MCF 10A (cell line): ENCODE measurements at regions of chr14 and their contacts with region 1.

Region 1: DNA sequence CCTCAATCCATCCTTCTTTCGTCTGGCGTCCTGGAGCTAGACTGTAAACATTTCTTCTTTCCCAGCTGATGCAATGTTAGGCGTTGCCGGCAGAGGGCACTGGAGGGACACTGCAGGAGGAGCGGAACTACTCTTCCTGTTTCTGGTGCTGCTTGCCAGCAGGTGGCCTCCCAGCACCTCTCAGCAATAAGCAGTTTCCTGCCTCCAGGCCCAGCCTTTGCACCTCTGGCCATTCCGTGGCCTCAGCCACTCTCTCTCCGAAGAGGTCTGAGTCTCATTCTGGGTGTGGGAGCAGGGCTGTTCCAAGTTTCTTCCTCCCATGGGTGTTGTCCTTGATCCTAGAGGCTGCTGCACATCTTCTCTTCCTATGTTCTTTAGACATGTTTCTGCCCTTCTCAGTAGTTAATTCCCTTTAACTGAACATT is 7.5 kb upstream of the ASPG start:
- DNase-seq: peak; percentile 86
- H3K4me3 Mint-ChIP-seq: no peak overlapping the region
- H3K27ac Mint-ChIP-seq: no peak overlapping the region
- H3K4me1 Mint-ChIP-seq: no peaks in the 10 kb centered on the region
- H3K27me3 Mint-ChIP-seq: no peaks in the 10 kb centered on the region
- CTCF ChIP-seq: peak; percentile 100

Region 2: DNA sequence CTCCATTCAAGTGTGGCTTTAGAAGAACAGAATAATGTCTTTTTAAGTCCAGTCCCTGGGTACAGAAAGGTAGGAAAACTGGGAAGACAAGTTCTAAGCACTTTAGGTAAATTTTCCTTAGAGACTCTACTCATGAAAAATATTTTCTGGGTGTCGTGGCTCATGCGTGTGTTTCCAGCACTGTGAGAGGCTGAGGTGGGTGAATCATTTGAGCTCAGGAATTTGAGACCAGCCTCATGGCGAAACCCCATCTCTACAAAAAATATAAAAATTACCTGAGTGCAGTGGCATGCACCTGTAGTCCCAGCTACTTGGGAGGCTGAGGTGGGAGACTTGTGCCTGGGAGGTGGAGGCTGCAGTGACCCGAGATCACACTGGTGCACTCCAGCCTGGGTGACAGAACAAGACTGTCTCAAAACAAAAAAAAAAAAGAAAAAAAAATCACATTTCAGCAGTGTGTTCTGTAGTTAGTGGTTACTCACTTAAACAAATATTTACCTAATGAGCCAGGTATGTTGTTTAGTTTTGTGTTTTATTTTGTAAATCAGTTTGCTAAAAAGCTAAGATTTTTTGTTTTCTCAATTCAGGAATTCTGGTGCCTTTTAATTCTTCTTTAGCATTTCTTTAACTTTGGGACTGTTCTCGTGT is 83.4 kb before region 1 on chr14:
- CTCF ChIA-PET with region 1: interaction called, 18 read pairs
- POLR2A ChIA-PET with region 1: interaction called, 5 read pairs
- intact Hi-C with region 1: no loop called
- DNase-seq: peak; percentile 20
- H3K4me3 Mint-ChIP-seq: no peak overlapping the region
- H3K27ac Mint-ChIP-seq: no peak overlapping the region
- H3K4me1 Mint-ChIP-seq: no peaks in the 10 kb centered on the region
- H3K27me3 Mint-ChIP-seq: no peaks in the 10 kb centered on the region
- CTCF ChIP-seq: no peak

Region 3: GRCh38 chr14:104094709-104095438 is 16.8 kb after region 1 on chr14:
- CTCF ChIA-PET with region 1: interaction called, 16 read pairs
- POLR2A ChIA-PET with region 1: no interaction called
- intact Hi-C with region 1: no loop called
- DNase-seq: peak; percentile 56
- H3K4me3 Mint-ChIP-seq: no peak overlapping the region
- H3K27ac Mint-ChIP-seq: no peak overlapping the region
- H3K4me1 Mint-ChIP-seq: no peaks in the 10 kb centered on the region
- H3K27me3 Mint-ChIP-seq: no peaks in the 10 kb centered on the region
- CTCF ChIP-seq: peak; percentile 95

Region 4: DNA sequence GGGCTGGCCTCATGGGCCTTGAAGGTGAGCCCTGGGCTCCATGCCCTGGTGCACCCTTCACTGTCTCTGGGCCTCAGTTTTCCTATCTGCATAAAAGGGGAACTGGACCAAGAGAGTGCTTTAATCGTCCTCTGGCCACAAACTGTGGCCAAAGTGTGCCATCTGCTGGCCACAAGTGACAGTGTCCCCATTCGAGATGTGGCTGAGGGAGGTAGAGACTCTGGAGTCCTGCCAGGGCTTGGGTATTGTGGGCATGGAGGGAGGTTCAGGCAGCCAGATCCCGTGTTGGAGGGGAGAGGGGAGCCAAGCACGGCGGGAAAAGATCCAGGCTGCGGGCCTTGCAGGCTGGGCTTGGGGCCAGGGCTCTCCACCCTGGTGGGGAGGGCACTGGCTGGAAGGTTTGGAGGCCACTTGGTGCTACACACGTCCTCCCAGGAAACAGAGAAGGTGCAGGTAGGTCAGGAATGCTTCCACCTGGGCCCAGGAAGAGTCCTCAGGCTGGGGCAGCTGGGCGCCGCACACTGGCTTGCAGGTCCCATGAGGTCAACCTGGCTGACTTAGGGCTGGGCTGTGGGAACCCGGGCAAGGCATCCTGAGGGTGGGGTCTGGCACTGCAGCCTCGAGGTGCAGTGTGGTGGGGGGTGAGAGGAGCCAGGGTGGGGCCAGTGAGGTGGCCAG is 53.1 kb after region 1 on chr14:
- CTCF ChIA-PET with region 1: interaction called, 156 read pairs
- POLR2A ChIA-PET with region 1: no interaction called
- intact Hi-C with region 1: loop called (anchors 1 kb)
- DNase-seq: peak; percentile 61
- H3K4me3 Mint-ChIP-seq: no peak overlapping the region
- H3K27ac Mint-ChIP-seq: no peak overlapping the region
- H3K4me1 Mint-ChIP-seq: no peaks in the 10 kb centered on the region
- H3K27me3 Mint-ChIP-seq: peaks cover 55% of the 10 kb centered on the region
- CTCF ChIP-seq: peak; percentile 80

Region 5: DNA sequence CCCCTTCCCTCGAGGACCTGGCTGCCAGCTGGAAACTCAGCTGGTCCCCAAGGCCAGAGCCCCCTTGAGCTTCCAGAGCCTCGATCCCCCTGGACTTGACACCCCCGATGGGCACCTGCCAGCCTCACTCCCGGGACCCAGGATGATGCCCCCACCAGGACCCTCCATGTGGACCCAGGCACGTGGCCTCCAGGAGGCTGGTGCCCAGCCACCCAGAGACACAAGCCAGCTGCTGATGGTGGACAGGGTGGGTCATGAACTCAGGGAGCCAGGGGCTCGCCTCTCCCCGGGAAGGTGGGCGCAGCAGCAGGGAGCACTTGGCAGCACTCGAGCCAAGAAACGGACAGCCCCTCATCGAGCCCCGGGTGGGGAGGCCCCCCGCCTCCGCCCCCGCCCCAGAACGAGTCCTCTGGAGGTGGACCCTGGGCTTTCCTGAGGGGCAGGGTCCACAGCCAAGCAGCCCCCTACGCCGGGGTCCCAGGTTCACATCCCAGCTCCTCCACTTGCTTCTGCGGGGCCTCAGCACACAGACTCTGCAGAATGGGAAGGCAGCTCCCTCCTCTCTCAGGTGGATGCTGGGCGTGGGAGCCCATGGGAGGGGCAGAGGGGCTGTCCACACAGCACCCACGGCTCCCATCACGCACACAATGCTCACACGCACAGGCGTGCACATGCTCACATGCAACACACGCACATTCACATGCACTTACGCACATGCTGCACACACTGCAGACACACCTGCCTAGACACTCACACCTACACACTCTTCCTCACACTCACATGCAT is 513.7 kb after region 1 on chr14:
- CTCF ChIA-PET with region 1: no interaction called
- POLR2A ChIA-PET with region 1: no interaction called
- intact Hi-C with region 1: no loop called
- DNase-seq: no peak
- H3K4me3 Mint-ChIP-seq: no peak overlapping the region
- H3K27ac Mint-ChIP-seq: no peak overlapping the region
- H3K4me1 Mint-ChIP-seq: peaks cover 5% of the 10 kb centered on the region
- H3K27me3 Mint-ChIP-seq: peaks cover 26% of the 10 kb centered on the region
- CTCF ChIP-seq: no peak

Region 6: DNA sequence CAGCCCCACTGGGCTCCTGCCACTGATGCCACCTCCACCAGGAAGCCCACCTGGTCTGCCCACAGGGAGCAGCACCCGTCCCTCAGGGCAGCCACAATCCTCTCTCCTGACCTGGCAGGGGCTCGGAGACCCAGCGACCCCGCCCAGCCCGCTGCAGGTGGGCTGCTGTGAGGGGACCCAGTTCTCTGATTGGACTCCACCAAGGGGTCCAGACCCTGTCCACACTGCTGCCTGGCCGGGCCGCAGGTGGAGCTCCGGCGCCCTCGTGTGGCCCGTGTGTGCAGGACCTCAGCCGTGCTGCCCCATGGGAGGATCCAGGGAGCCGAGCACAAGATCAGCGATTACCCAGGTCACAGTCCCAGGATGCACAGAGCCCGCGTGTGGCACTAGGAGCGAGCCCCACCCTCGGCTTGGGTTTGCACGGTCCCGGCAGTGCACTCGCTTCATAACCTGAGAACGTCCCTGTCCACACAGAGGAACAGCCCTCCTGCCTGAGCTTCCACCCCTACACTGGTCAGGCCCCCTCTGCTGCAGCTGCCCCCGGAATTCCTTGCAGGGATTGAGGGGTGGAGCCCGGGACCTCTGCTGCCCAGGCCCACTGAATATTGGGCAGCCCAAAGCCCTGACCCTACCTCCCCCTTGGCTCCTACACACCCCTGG is 562.0 kb after region 1 on chr14:
- CTCF ChIA-PET with region 1: interaction called, 7 read pairs
- POLR2A ChIA-PET with region 1: no interaction called
- intact Hi-C with region 1: loop called (anchors 1 kb)
- DNase-seq: peak; percentile 60
- H3K4me3 Mint-ChIP-seq: no peak overlapping the region
- H3K27ac Mint-ChIP-seq: no peak overlapping the region
- H3K4me1 Mint-ChIP-seq: no peaks in the 10 kb centered on the region
- H3K27me3 Mint-ChIP-seq: peaks cover 32% of the 10 kb centered on the region
- CTCF ChIP-seq: peak; percentile 99